HEK293T (cell line): ENCODE measurements at regions of chr19 and their contacts with region 1.

Region 1: GRCh38 chr19:44783545-44783944 is 5.9 kb downstream of the CBLC start:
- DNase-seq: no peak

Region 2: DNA sequence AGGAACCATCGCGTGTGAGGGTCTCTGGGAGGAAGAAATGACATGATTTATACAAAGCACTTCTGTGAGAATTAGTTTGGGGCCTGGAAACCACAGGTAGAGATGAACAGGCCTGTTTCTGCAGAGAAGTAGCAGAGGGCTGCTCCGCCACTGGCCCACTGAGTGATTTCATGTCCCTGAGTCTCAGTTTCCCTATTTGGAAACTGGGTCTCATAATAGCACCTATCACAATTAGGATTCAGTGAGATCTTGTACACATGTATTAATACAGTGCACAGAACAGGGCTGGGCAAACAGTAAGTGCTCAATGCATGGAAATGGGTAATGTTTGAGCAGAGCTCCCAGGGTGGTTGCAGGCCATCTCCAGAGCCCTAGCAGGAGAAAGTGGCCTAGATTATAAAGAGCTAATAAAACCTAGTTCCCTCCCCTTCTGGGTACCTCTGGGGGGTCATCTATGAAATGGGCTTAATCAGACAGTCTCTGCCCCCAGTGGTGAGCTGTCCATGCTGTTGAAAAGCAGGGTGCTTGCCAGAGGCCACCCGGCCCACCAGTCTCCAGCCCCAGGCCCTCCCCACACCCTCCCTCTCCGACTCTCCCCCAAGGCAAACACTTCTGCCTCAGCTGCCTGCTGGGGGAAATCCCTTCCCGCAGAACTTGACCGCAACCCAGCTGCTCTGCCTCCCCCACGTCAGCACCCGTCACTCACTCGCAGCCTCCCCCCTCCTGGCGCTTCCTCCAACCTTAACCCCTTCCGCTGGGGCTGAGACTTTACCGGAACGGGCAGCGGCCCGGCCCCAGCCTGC is 30.5 kb before region 1 on chr19:
- CTCF ChIA-PET with region 1: no interaction called
- POLR2A ChIA-PET with region 1: no interaction called
- DNase-seq: peak; percentile 57

Region 3: DNA sequence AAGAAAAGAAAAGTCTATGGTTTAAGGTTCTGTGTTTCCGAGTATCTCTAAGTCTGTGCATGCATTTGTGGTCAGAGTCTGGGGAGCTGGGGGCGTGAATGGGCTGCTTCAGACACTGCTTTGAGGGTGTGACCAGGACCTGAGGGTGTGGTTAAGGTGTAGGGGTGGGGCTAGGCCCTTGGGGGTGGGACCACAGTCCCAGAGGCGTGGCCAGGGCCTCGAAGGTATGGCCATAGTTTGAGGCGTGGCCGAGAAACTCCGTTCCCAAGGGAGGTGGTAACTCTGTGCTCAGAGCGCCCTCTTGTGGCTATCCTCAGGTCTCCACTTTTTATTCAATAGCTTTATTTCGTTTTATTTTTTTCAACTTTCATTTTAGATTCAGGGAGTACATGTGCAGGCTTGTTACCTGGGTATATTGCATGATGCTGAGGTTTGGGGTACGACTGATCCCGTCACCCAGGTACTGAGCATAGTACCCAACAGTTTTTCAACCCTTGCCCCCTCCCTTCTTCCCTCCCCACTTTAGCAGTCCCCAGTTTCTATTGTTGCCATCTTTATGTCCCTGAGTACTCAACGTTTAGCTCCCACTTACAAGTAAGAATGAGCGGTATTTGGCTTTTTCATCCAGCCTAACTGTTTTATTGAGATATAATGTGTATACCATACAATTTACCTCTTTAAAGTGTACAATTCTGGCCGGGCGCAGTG is 12.8 kb before region 1 on chr19:
- CTCF ChIA-PET with region 1: interaction called, 20 read pairs
- POLR2A ChIA-PET with region 1: no interaction called
- DNase-seq: peak; percentile 99